Lower lobe of right lung (tissue), 2 donors: ENCODE measurements at regions of chr11 and their contacts with region 1.

Region 1: DNA sequence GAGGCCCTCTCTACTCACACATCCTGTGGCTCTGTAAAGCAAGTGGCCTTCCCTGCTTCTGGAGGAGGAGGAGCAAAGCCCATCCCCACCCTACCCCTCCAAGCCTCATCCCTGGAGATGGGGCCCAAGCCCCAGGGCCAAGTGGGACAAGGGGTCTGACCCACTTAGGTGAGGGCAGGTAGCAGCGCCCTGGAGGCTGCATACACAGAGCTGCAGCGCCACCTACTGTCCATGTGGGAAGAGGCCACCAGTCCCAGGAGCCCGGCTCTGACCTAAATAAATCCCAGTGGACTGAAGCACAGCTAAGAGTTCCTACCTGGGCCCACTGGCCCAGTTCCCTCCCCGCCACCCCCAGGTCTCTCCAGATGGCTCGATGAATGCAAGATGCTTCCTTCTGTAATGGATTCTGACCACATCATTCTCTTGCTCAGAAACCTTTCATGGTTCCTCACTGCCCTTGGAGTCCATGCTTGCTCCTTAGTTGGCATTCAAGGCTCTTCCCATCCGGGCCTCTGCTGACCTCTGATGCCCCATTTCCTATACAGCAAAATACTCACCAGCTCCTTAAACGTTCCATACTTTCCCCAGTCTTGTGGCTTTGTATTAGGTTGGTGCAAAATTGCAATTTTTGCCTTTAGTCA is 62.1 kb downstream of the THAP12 start:
- DNase-seq: peak; percentile 88
- ATAC-seq: peak; percentile 90 to 92
- H3K4me3 ChIP-seq: no peak overlapping the region
- H3K27ac ChIP-seq: no peak overlapping the region
- H3K4me1 ChIP-seq: no peaks in the 10 kb centered on the region
- H3K27me3 ChIP-seq: peaks cover 15% of the 10 kb centered on the region
- CTCF ChIP-seq: peak; percentile 94

Region 2: GRCh38 chr11:76209973-76210930 is 108.6 kb before region 1 on chr11:
- intact Hi-C with region 1: loop called (anchors 10 kb)
- DNase-seq: peak; percentile 78
- ATAC-seq: peak; percentile 30 to 45
- H3K4me3 ChIP-seq: peak overlapping the region; percentile 72
- H3K27ac ChIP-seq: peak overlapping the region; percentile 24
- H3K4me1 ChIP-seq: peaks cover 52% of the 10 kb centered on the region
- H3K27me3 ChIP-seq: peaks cover 50% of the 10 kb centered on the region
- CTCF ChIP-seq: no peak